CD8-positive, alpha-beta memory T cell (primary cell): ENCODE measurements at regions of chr13 and their contacts with region 1.

Region 1: GRCh38 chr13:51452361-51453206 is at the start of gene INTS6:
- DNase-seq: peak; percentile 97 to 100 (median 99)
- H3K4me3 ChIP-seq: peak within 1 kb of the TSS; percentile 88
- H3K4me3 Mint-ChIP-seq: peak within 1 kb of the TSS; percentile 87 to 97 (median 95)
- H3K27ac ChIP-seq: peak within 1 kb of the TSS; percentile 90
- H3K27ac Mint-ChIP-seq: peak within 1 kb of the TSS; percentile 89 to 99 (median 97)
- H3K4me1 ChIP-seq: peaks cover 44% of the 10 kb centered on the region
- H3K4me1 Mint-ChIP-seq: peaks cover 52 to 70% (median 63%) of the 10 kb centered on the region in 3 donors
- H3K27me3 ChIP-seq: no peaks in the 10 kb centered on the region
- H3K27me3 Mint-ChIP-seq: peaks cover 0 to 8% of the 10 kb centered on the region in 2 donors
- total RNA-seq, gene INTS6: 56.6 to 58.2 TPM

Region 2: GRCh38 chr13:51192348-51192747 is 260.2 kb before region 1 on chr13:
- CTCF ChIA-PET with region 1: no interaction called
- POLR2A ChIA-PET with region 1: no interaction called
- DNase-seq: no peak
- H3K4me3 ChIP-seq: no peak overlapping the region
- H3K4me3 Mint-ChIP-seq: no peak overlapping the region
- H3K27ac ChIP-seq: no peak overlapping the region
- H3K27ac Mint-ChIP-seq: no peak overlapping the region
- H3K4me1 ChIP-seq: no peaks in the 10 kb centered on the region
- H3K4me1 Mint-ChIP-seq: no peaks in the 10 kb centered on the region
- H3K27me3 ChIP-seq: no peaks in the 10 kb centered on the region
- H3K27me3 Mint-ChIP-seq: peaks cover 15 to 61% of the 10 kb centered on the region in 2 donors

Region 3: DNA sequence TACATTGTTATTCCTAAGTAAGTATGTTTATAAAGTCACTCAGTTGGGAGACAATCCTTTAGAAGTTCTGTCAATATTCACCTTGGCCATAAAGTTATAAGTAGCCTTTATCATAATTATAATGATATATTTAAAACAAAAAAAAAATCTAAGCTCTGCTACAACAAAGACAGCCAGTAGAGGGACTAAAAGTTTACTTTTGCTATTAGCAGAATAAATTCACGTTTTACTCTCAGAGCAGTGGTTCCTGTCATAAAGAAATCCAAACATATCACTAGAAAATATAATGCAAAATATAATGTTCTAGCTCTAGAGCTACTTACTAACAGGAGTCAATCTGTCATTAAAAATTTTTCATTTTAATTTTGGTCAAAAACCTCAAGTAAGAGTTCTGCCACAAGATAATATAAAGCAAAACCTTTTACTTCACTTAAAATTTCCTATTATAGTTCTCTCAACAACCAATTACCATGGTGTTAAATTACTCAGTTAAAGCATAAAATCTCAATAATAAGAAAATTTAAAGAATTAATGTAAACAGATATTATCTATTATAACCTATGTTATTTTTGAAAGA is 17.5 kb before region 1 on chr13:
- CTCF ChIA-PET with region 1: interaction called, 3 read pairs
- POLR2A ChIA-PET with region 1: interaction called, 11 read pairs
- DNase-seq: peak in 2 of 5 donors; percentile 24 to 37
- H3K4me3 ChIP-seq: no peak overlapping the region
- H3K4me3 Mint-ChIP-seq: no peak overlapping the region
- H3K27ac ChIP-seq: no peak overlapping the region
- H3K27ac Mint-ChIP-seq: peak overlapping the region in 1 of 8 donors; percentile 19
- H3K4me1 ChIP-seq: peaks cover 5% of the 10 kb centered on the region
- H3K4me1 Mint-ChIP-seq: peaks cover 17 to 43% (median 27%) of the 10 kb centered on the region in 3 donors
- H3K27me3 ChIP-seq: no peaks in the 10 kb centered on the region
- H3K27me3 Mint-ChIP-seq: no peaks in the 10 kb centered on the region

Region 4: GRCh38 chr13:51534041-51534817 is 81.6 kb after region 1 on chr13:
- CTCF ChIA-PET with region 1: no interaction called
- POLR2A ChIA-PET with region 1: interaction called, 10 read pairs
- DNase-seq: peak; percentile 4 to 53 (median 23)
- H3K4me3 ChIP-seq: no peak overlapping the region
- H3K4me3 Mint-ChIP-seq: peak overlapping the region in 6 of 7 donors; percentile 42 to 73 (median 53)
- H3K27ac ChIP-seq: no peak overlapping the region
- H3K27ac Mint-ChIP-seq: peak overlapping the region; percentile 51 to 84 (median 80)
- H3K4me1 ChIP-seq: peaks cover 28% of the 10 kb centered on the region
- H3K4me1 Mint-ChIP-seq: peaks cover 29 to 30% (median 29%) of the 10 kb centered on the region in 3 donors
- H3K27me3 ChIP-seq: no peaks in the 10 kb centered on the region
- H3K27me3 Mint-ChIP-seq: no peaks in the 10 kb centered on the region

Region 5: GRCh38 chr13:51583875-51584730 is 131.5 kb after region 1 on chr13 and contains the start of gene WDFY2:
- CTCF ChIA-PET with region 1: interaction called, 7 read pairs
- POLR2A ChIA-PET with region 1: interaction called, 43 read pairs
- DNase-seq: peak; percentile 99 to 100 (median 99)
- H3K4me3 ChIP-seq: peak within 1 kb of the TSS; percentile 94
- H3K4me3 Mint-ChIP-seq: peak within 1 kb of the TSS; percentile 98 to 100 (median 99)
- H3K27ac ChIP-seq: peak within 1 kb of the TSS; percentile 84
- H3K27ac Mint-ChIP-seq: peak within 1 kb of the TSS; percentile 95 to 100 (median 99)
- H3K4me1 ChIP-seq: peaks cover 25% of the 10 kb centered on the region
- H3K4me1 Mint-ChIP-seq: peaks cover 32 to 37% (median 36%) of the 10 kb centered on the region in 3 donors
- H3K27me3 ChIP-seq: no peaks in the 10 kb centered on the region
- H3K27me3 Mint-ChIP-seq: no peaks in the 10 kb centered on the region
- total RNA-seq, gene WDFY2: 6.1 to 7.1 TPM

Region 6: GRCh38 chr13:51614350-51614786 is 161.8 kb after region 1 on chr13:
- CTCF ChIA-PET with region 1: interaction called, 4 read pairs
- POLR2A ChIA-PET with region 1: interaction called, 10 read pairs
- DNase-seq: peak in 4 of 5 donors; percentile 10 to 52 (median 40)
- H3K4me3 ChIP-seq: peak overlapping the region; percentile 61
- H3K4me3 Mint-ChIP-seq: peak overlapping the region; percentile 53 to 92 (median 86)
- H3K27ac ChIP-seq: peak overlapping the region; percentile 18
- H3K27ac Mint-ChIP-seq: peak overlapping the region; percentile 37 to 98 (median 96)
- H3K4me1 ChIP-seq: peaks cover 11% of the 10 kb centered on the region
- H3K4me1 Mint-ChIP-seq: peaks cover 13 to 23% (median 21%) of the 10 kb centered on the region in 3 donors
- H3K27me3 ChIP-seq: no peaks in the 10 kb centered on the region
- H3K27me3 Mint-ChIP-seq: no peaks in the 10 kb centered on the region

Region 7: GRCh38 chr13:51803422-51804294 is 351.1 kb after region 1 on chr13 and contains the start of gene DHRS12:
- CTCF ChIA-PET with region 1: interaction called, 7 read pairs
- POLR2A ChIA-PET with region 1: interaction called, 40 read pairs
- DNase-seq: peak; percentile 81 to 94 (median 93)
- H3K4me3 ChIP-seq: peak within 1 kb of the TSS; percentile 68
- H3K4me3 Mint-ChIP-seq: peak within 1 kb of the TSS; percentile 91 to 99 (median 95)
- H3K27ac ChIP-seq: peak within 1 kb of the TSS; percentile 99
- H3K27ac Mint-ChIP-seq: peak within 1 kb of the TSS; percentile 98 to 100 (median 100)
- H3K4me1 ChIP-seq: peaks cover 39% of the 10 kb centered on the region
- H3K4me1 Mint-ChIP-seq: peaks cover 46 to 61% (median 50%) of the 10 kb centered on the region in 3 donors
- H3K27me3 ChIP-seq: no peaks in the 10 kb centered on the region
- H3K27me3 Mint-ChIP-seq: peaks cover 0 to 8% of the 10 kb centered on the region in 2 donors
- total RNA-seq, gene DHRS12: 7.1 to 7.2 TPM

Region 8: DNA sequence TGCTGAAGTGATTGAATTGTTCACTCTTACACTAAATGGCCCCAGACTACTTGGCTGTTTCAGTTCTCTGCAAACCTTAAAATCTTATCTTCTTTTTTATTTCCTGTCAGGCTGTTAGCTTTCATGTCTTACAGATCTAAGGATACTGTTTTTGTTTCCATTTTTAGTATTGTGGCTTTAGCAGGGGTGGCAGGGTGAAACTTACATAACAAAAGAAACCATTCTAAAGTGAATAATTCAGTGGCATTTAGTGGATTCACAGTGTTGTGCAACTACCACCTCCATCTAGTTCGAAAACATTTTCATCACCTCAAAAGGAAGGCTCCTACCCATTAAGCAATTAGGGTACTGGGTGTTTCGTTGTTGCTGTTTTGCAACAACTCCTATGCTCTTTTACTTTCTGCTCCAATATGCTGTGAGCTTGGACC is 372.6 kb after region 1 on chr13:
- CTCF ChIA-PET with region 1: no interaction called
- POLR2A ChIA-PET with region 1: interaction called, 15 read pairs
- DNase-seq: peak in 2 of 5 donors; percentile 71 to 82
- H3K4me3 ChIP-seq: peak overlapping the region; percentile 78
- H3K4me3 Mint-ChIP-seq: peak overlapping the region; percentile 68 to 92 (median 86)
- H3K27ac ChIP-seq: no peak overlapping the region
- H3K27ac Mint-ChIP-seq: peak overlapping the region; percentile 90 to 97 (median 94)
- H3K4me1 ChIP-seq: peaks cover 96% of the 10 kb centered on the region
- H3K4me1 Mint-ChIP-seq: peaks cover 78 to 93% (median 91%) of the 10 kb centered on the region in 3 donors
- H3K27me3 ChIP-seq: no peaks in the 10 kb centered on the region
- H3K27me3 Mint-ChIP-seq: no peaks in the 10 kb centered on the region